ENCODE measurements at regions of chr13 and their contacts with region 1.

Region 1: GRCh38 chr13:92804346-92804745 is 422.3 kb upstream of the GPC6 start:
- DNase-seq: peak; percentile 51
- ATAC-seq: peak; percentile 74
- H3K4me3 ChIP-seq: no peak overlapping the region
- H3K27ac ChIP-seq: no peak overlapping the region
- H3K4me1 ChIP-seq: peaks cover 3% of the 10 kb centered on the region; the same call in 1 of the 2 replicates
- H3K27me3 ChIP-seq: no peaks in the 10 kb centered on the region
- CTCF ChIP-seq: no peak

Region 2: GRCh38 chr13:92843549-92843948 is 39.2 kb after region 1 on chr13:
- CTCF ChIA-PET with region 1: no interaction called
- POLR2A ChIA-PET with region 1: no interaction called
- intact Hi-C with region 1: loop called (anchors 1 kb)
- DNase-seq: peak; percentile 67
- ATAC-seq: peak; percentile 78
- H3K4me3 ChIP-seq: no peak overlapping the region
- H3K27ac ChIP-seq: no peak overlapping the region
- H3K4me1 ChIP-seq: peaks cover 7% of the 10 kb centered on the region; the same call in 1 of the 2 replicates
- H3K27me3 ChIP-seq: no peaks in the 10 kb centered on the region
- CTCF ChIP-seq: no peak

Region 3: DNA sequence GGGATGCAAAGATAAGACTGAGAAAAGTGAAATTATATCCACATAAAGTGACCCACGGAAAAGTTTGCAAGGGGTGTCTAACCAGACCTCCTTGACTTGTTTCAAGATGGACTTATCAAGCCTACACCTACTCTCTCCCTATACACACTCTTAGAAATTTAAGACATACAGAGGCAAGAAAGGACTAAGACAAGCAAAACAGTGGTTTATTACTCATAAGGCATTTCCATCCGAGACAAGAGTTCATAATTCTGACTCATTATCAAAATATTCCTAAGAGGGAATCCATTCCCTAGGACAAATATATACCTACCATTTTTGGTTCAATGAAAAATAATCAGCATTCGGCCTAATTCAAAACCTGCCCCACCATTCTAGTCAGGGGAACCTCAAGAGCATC is 189.7 kb after region 1 on chr13:
- CTCF ChIA-PET with region 1: no interaction called
- POLR2A ChIA-PET with region 1: no interaction called
- intact Hi-C with region 1: no loop called
- DNase-seq: peak; percentile 42
- ATAC-seq: peak; percentile 27; the same call in 1 of the 2 replicates
- H3K4me3 ChIP-seq: no peak overlapping the region
- H3K27ac ChIP-seq: no peak overlapping the region
- H3K4me1 ChIP-seq: no peaks in the 10 kb centered on the region
- H3K27me3 ChIP-seq: no peaks in the 10 kb centered on the region
- CTCF ChIP-seq: no peak

Region 4: GRCh38 chr13:93377196-93377595 is 572.9 kb after region 1 on chr13:
- CTCF ChIA-PET with region 1: no interaction called
- POLR2A ChIA-PET with region 1: no interaction called
- intact Hi-C with region 1: no loop called
- DNase-seq: no peak
- ATAC-seq: no peak
- H3K4me3 ChIP-seq: no peak overlapping the region
- H3K27ac ChIP-seq: no peak overlapping the region
- H3K4me1 ChIP-seq: no peaks in the 10 kb centered on the region
- H3K27me3 ChIP-seq: no peaks in the 10 kb centered on the region
- CTCF ChIP-seq: no peak